ENCODE measurements at regions of chr10 and their contacts with region 1.

Region 1: GRCh38 chr10:124719213-124719851 is 24.8 kb downstream of the FAM53B start:
- DNase-seq: peak; percentile 90
- ATAC-seq: peak; percentile 48
- H3K4me3 ChIP-seq: peak overlapping the region in 3 of 5 experiments; percentile 17 to 37 (median 33)
- H3K4me3 Mint-ChIP-seq: peak overlapping the region; percentile 82
- H3K27ac ChIP-seq: peak overlapping the region; percentile 92 to 98
- H3K27ac Mint-ChIP-seq: peak overlapping the region; percentile 85
- H3K4me1 ChIP-seq: peaks cover 97% of the 10 kb centered on the region in 2 donors
- H3K4me1 Mint-ChIP-seq: peaks cover 91% of the 10 kb centered on the region
- H3K27me3 ChIP-seq: no peaks in the 10 kb centered on the region
- H3K27me3 Mint-ChIP-seq: no peaks in the 10 kb centered on the region
- CTCF ChIP-seq: peak; percentile 77

Region 2: GRCh38 chr10:124539935-124540641 is 179.2 kb before region 1 on chr10:
- CTCF ChIA-PET with region 1: interaction called, 157 read pairs
- POLR2A ChIA-PET with region 1: interaction called, 8 read pairs
- intact Hi-C with region 1: no loop called
- DNase-seq: peak; percentile 89
- ATAC-seq: peak; percentile 71
- H3K4me3 ChIP-seq: no peak overlapping the region
- H3K4me3 Mint-ChIP-seq: peak overlapping the region; percentile 65
- H3K27ac ChIP-seq: peak overlapping the region; percentile 76 to 94
- H3K27ac Mint-ChIP-seq: peak overlapping the region; percentile 95
- H3K4me1 ChIP-seq: peaks cover 88 to 99% of the 10 kb centered on the region in 2 donors
- H3K4me1 Mint-ChIP-seq: peaks cover 90% of the 10 kb centered on the region
- H3K27me3 ChIP-seq: no peaks in the 10 kb centered on the region
- H3K27me3 Mint-ChIP-seq: no peaks in the 10 kb centered on the region
- CTCF ChIP-seq: peak; percentile 69

Region 3: GRCh38 chr10:124619195-124619594 is 100.1 kb before region 1 on chr10:
- CTCF ChIA-PET with region 1: interaction called, 14 read pairs
- POLR2A ChIA-PET with region 1: interaction called, 16 read pairs
- intact Hi-C with region 1: loop called (anchors 2 kb)
- DNase-seq: peak; percentile 84
- ATAC-seq: peak; percentile 75
- H3K4me3 ChIP-seq: peak overlapping the region in 4 of 5 experiments; percentile 19 to 55 (median 28)
- H3K4me3 Mint-ChIP-seq: peak overlapping the region; percentile 87
- H3K27ac ChIP-seq: peak overlapping the region; percentile 97 to 98
- H3K27ac Mint-ChIP-seq: peak overlapping the region; percentile 99
- H3K4me1 ChIP-seq: peaks cover 96 to 100% of the 10 kb centered on the region in 2 donors
- H3K4me1 Mint-ChIP-seq: peaks cover 93% of the 10 kb centered on the region
- H3K27me3 ChIP-seq: no peaks in the 10 kb centered on the region
- H3K27me3 Mint-ChIP-seq: no peaks in the 10 kb centered on the region
- CTCF ChIP-seq: no peak

Region 4: GRCh38 chr10:124641282-124642087 is 77.8 kb before region 1 on chr10:
- CTCF ChIA-PET with region 1: interaction called, 58 read pairs
- POLR2A ChIA-PET with region 1: interaction called, 3 read pairs
- intact Hi-C with region 1: loop called (anchors 1 kb)
- DNase-seq: peak; percentile 81
- ATAC-seq: peak; percentile 76
- H3K4me3 ChIP-seq: peak overlapping the region in 4 of 5 experiments; percentile 18 to 37 (median 20)
- H3K4me3 Mint-ChIP-seq: peak overlapping the region; percentile 83
- H3K27ac ChIP-seq: peak overlapping the region; percentile 86 to 92
- H3K27ac Mint-ChIP-seq: peak overlapping the region; percentile 94
- H3K4me1 ChIP-seq: peaks cover 99 to 100% of the 10 kb centered on the region in 2 donors
- H3K4me1 Mint-ChIP-seq: peaks cover 99% of the 10 kb centered on the region
- H3K27me3 ChIP-seq: no peaks in the 10 kb centered on the region
- H3K27me3 Mint-ChIP-seq: no peaks in the 10 kb centered on the region
- CTCF ChIP-seq: no peak

Region 5: DNA sequence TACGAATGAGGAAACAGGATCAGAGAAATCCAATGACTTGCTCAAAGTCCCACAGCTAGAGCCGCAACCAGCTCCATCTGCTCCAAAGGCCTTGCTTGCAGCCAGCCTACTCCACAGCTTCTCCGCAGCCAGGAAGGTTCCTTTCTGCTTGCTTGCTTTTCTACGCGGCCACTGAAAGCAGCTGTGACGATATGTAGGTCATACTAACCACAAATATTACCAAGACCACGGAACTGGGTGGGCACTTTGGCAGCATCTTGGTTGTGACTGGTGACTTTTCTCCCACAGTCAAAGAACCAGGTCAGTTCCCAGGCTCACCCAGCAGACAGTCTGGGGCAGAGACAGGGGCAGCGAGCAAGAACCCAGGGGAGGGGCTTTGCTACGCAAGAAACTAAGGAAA is 61.5 kb before region 1 on chr10:
- CTCF ChIA-PET with region 1: interaction called, 19 read pairs
- POLR2A ChIA-PET with region 1: interaction called, 3 read pairs
- intact Hi-C with region 1: no loop called
- DNase-seq: peak; percentile 55
- ATAC-seq: peak; percentile 52
- H3K4me3 ChIP-seq: no peak overlapping the region
- H3K4me3 Mint-ChIP-seq: peak overlapping the region; percentile 47
- H3K27ac ChIP-seq: peak overlapping the region; percentile 44 to 65
- H3K27ac Mint-ChIP-seq: peak overlapping the region; percentile 87
- H3K4me1 ChIP-seq: peaks cover 75 to 84% of the 10 kb centered on the region in 2 donors
- H3K4me1 Mint-ChIP-seq: peaks cover 85% of the 10 kb centered on the region
- H3K27me3 ChIP-seq: no peaks in the 10 kb centered on the region
- H3K27me3 Mint-ChIP-seq: no peaks in the 10 kb centered on the region
- CTCF ChIP-seq: no peak

Region 6: GRCh38 chr10:124688889-124689670 is 30.3 kb before region 1 on chr10:
- CTCF ChIA-PET with region 1: interaction called, 28 read pairs
- POLR2A ChIA-PET with region 1: interaction called, 6 read pairs
- intact Hi-C with region 1: loop called (anchors 5 kb)
- DNase-seq: no peak
- ATAC-seq: no peak
- H3K4me3 ChIP-seq: no peak overlapping the region
- H3K4me3 Mint-ChIP-seq: no peak overlapping the region
- H3K27ac ChIP-seq: peak overlapping the region in 1 of 2 donors; percentile 76
- H3K27ac Mint-ChIP-seq: peak overlapping the region; percentile 79
- H3K4me1 ChIP-seq: peaks cover 65 to 76% of the 10 kb centered on the region in 2 donors
- H3K4me1 Mint-ChIP-seq: peaks cover 77% of the 10 kb centered on the region
- H3K27me3 ChIP-seq: no peaks in the 10 kb centered on the region
- H3K27me3 Mint-ChIP-seq: no peaks in the 10 kb centered on the region
- CTCF ChIP-seq: no peak

Region 7: GRCh38 chr10:124703778-124704427 is 15.4 kb before region 1 on chr10:
- CTCF ChIA-PET with region 1: interaction called, 33 read pairs
- POLR2A ChIA-PET with region 1: interaction called, 17 read pairs
- intact Hi-C with region 1: no loop called
- DNase-seq: no peak
- ATAC-seq: no peak
- H3K4me3 ChIP-seq: no peak overlapping the region
- H3K4me3 Mint-ChIP-seq: peak overlapping the region; percentile 63
- H3K27ac ChIP-seq: peak overlapping the region; percentile 38 to 91
- H3K27ac Mint-ChIP-seq: peak overlapping the region; percentile 97
- H3K4me1 ChIP-seq: peaks cover 96 to 100% of the 10 kb centered on the region in 2 donors
- H3K4me1 Mint-ChIP-seq: peaks cover 93% of the 10 kb centered on the region
- H3K27me3 ChIP-seq: no peaks in the 10 kb centered on the region
- H3K27me3 Mint-ChIP-seq: no peaks in the 10 kb centered on the region
- CTCF ChIP-seq: no peak

Region 8: GRCh38 chr10:124975977-124976514 is 256.7 kb after region 1 on chr10:
- CTCF ChIA-PET with region 1: no interaction called
- POLR2A ChIA-PET with region 1: no interaction called
- intact Hi-C with region 1: no loop called
- DNase-seq: no peak
- ATAC-seq: no peak
- H3K4me3 ChIP-seq: no peak overlapping the region
- H3K4me3 Mint-ChIP-seq: no peak overlapping the region
- H3K27ac ChIP-seq: no peak overlapping the region
- H3K27ac Mint-ChIP-seq: no peak overlapping the region
- H3K4me1 ChIP-seq: no peaks in the 10 kb centered on the region
- H3K4me1 Mint-ChIP-seq: peaks cover 6% of the 10 kb centered on the region
- H3K27me3 ChIP-seq: no peaks in the 10 kb centered on the region
- H3K27me3 Mint-ChIP-seq: no peaks in the 10 kb centered on the region
- CTCF ChIP-seq: no peak